ENCODE measurements at regions of chr17 and their contacts with region 1.

Region 1: GRCh38 chr17:7989781-7990655 is 12.4 kb upstream of the GUCY2D start:
- DNase-seq: peak; percentile 85 to 94 (median 88)
- H3K4me3 ChIP-seq: peak overlapping the region in 1 of 2 donors; percentile 58
- H3K4me3 Mint-ChIP-seq: peak overlapping the region; percentile 76 to 90 (median 84)
- H3K27ac ChIP-seq: peak overlapping the region; percentile 35
- H3K27ac Mint-ChIP-seq: peak overlapping the region; percentile 63 to 92 (median 87)
- H3K4me1 ChIP-seq: peaks cover 16% of the 10 kb centered on the region
- H3K4me1 Mint-ChIP-seq: peaks cover 12 to 33% (median 19%) of the 10 kb centered on the region in 4 donors
- H3K27me3 ChIP-seq: no peaks in the 10 kb centered on the region
- H3K27me3 Mint-ChIP-seq: peaks cover 0 to 1% of the 10 kb centered on the region in 2 donors

Region 2: DNA sequence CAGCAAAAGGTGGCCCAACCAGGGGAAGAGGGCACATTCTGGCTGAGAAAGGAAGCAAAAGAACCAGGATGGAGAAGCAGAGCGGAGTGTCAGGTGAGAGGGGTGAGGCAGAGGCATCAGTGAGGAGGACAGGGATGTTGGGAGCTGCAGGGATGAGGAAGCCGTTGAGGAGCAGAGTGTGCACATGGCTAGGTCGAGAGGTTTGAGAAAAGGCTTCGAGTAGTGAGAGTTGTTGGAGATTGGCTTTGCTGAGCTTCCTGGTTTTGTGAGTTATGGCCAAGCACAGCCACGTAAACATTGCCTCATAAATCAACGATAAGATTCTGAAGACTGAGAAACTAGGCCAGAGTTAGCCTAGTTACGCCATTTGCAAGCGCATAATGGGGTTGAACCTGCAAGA is 245.6 kb before region 1 on chr17:
- CTCF ChIA-PET with region 1: interaction called, 11 read pairs
- POLR2A ChIA-PET with region 1: no interaction called
- intact Hi-C with region 1: loop called (anchors 1 kb)
- DNase-seq: no peak
- H3K4me3 ChIP-seq: no peak overlapping the region
- H3K4me3 Mint-ChIP-seq: no peak overlapping the region
- H3K27ac ChIP-seq: no peak overlapping the region
- H3K27ac Mint-ChIP-seq: no peak overlapping the region
- H3K4me1 ChIP-seq: no peaks in the 10 kb centered on the region
- H3K4me1 Mint-ChIP-seq: peaks cover 0 to 4% (median 2%) of the 10 kb centered on the region in 4 donors
- H3K27me3 ChIP-seq: no peaks in the 10 kb centered on the region
- H3K27me3 Mint-ChIP-seq: peaks cover 14 to 18% of the 10 kb centered on the region in 2 donors

Region 3: GRCh38 chr17:7834962-7835813 is 154.8 kb before region 1 on chr17:
- CTCF ChIA-PET with region 1: interaction called, 19 read pairs
- POLR2A ChIA-PET with region 1: interaction called, 12 read pairs
- intact Hi-C with region 1: no loop called
- DNase-seq: peak; percentile 90 to 98 (median 92)
- H3K4me3 ChIP-seq: peak overlapping the region; percentile 76 to 84
- H3K4me3 Mint-ChIP-seq: peak overlapping the region; percentile 90 to 98 (median 94)
- H3K27ac ChIP-seq: peak overlapping the region; percentile 98
- H3K27ac Mint-ChIP-seq: peak overlapping the region; percentile 99 to 100 (median 99)
- H3K4me1 ChIP-seq: peaks cover 45% of the 10 kb centered on the region
- H3K4me1 Mint-ChIP-seq: peaks cover 36 to 64% (median 42%) of the 10 kb centered on the region in 4 donors
- H3K27me3 ChIP-seq: no peaks in the 10 kb centered on the region
- H3K27me3 Mint-ChIP-seq: peaks cover 0 to 9% of the 10 kb centered on the region in 2 donors

Region 4: GRCh38 chr17:7887482-7888183 is 102.4 kb before region 1 on chr17:
- CTCF ChIA-PET with region 1: interaction called, 8 read pairs
- POLR2A ChIA-PET with region 1: interaction called, 4 read pairs
- intact Hi-C with region 1: loop called (anchors 1 kb)
- DNase-seq: peak; percentile 89 to 95 (median 92)
- H3K4me3 ChIP-seq: peak overlapping the region; percentile 86 to 96
- H3K4me3 Mint-ChIP-seq: no peak overlapping the region
- H3K27ac ChIP-seq: peak overlapping the region; percentile 65
- H3K27ac Mint-ChIP-seq: no peak overlapping the region
- H3K4me1 ChIP-seq: peaks cover 46% of the 10 kb centered on the region
- H3K4me1 Mint-ChIP-seq: peaks cover 10 to 16% (median 12%) of the 10 kb centered on the region in 4 donors
- H3K27me3 ChIP-seq: no peaks in the 10 kb centered on the region
- H3K27me3 Mint-ChIP-seq: no peaks in the 10 kb centered on the region

Region 5: DNA sequence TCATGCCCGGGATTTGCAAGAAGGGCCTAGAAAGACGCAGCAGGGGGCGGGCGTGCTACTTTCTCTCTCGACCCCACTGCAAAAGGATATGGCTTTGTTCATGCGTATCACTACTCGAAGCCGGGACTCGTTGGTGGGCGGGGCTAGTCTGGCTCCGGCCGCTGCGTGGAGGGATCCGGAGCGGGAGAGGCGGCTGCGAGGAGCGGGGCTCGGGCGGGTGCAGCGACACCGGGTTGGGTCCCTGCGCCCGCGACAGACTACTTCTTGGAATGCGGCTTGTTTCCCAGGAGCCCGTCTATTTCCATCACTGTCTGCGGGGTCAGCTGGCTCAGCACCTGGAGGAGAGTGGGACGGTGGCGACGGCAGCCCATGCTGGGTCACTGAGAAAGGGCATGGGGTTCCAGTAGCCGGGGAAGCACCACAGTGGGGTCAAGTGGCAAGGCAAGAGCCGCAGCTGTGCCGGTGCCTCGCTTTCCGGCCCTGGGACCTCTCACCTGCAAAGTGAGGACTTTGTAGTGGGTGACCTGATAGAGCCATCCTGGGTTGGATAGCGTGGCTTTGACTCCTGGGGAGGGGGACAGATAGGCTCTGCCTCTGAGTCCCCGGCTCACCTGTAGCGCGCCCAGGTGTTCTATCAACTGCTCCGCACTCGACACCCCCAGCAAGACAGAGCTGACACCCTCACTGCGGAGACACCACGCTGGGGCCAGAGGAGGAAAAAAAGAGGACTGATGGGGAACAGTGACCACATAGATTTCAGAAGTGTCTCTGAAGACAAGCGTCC is 67.0 kb before region 1 on chr17:
- CTCF ChIA-PET with region 1: interaction called, 219 read pairs
- POLR2A ChIA-PET with region 1: interaction called, 14 read pairs
- intact Hi-C with region 1: no loop called
- DNase-seq: peak; percentile 79 to 86 (median 80)
- H3K4me3 ChIP-seq: peak overlapping the region; percentile 48 to 70
- H3K4me3 Mint-ChIP-seq: peak overlapping the region; percentile 77 to 99 (median 88)
- H3K27ac ChIP-seq: peak overlapping the region; percentile 63
- H3K27ac Mint-ChIP-seq: peak overlapping the region; percentile 74 to 100 (median 93)
- H3K4me1 ChIP-seq: peaks cover 15% of the 10 kb centered on the region
- H3K4me1 Mint-ChIP-seq: peaks cover 7 to 25% (median 17%) of the 10 kb centered on the region in 4 donors
- H3K27me3 ChIP-seq: no peaks in the 10 kb centered on the region
- H3K27me3 Mint-ChIP-seq: no peaks in the 10 kb centered on the region

Region 6: DNA sequence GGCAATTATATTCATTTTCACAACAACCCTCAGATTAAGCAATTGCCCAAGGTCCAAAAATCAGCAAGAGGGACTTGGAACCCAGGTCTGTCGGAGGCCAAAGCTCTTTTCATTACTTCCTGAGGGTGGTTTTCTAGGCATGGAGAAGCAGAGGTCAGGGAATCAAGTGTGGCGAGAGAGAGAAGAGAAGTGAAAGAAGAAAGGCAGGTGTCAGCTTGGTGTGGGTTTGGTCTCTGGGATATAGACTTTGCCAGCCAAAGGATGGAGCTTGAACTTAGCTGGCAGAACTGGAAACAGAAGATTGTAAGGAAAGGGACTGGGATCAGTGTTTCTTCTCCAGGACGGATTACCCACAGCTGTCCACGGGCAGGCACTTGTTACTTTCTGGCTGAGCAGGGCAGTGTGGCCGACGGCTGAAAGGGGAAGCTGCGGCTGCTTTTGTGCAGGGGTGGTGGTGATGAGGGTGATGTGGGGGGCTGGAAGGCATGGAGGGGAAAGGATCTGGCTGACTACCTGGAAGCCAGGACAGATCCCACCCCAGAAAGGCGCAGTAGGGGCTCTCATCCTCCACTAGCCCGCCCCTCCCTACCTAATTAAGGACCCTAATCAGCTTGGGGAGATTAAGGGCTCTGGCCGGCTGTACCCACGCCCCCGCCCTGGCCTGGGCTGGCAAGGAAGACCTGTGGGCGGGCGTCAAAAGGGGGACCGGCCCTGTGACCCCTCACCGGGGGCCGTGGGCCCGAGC is 12.1 kb after region 1 on chr17 and contains the start of gene GUCY2D:
- CTCF ChIA-PET with region 1: interaction called, 14 read pairs
- POLR2A ChIA-PET with region 1: interaction called, 6 read pairs
- intact Hi-C with region 1: no loop called
- DNase-seq: no peak
- H3K4me3 ChIP-seq: no peak within 1 kb of the TSS
- H3K4me3 Mint-ChIP-seq: peak within 1 kb of the TSS in 7 of 8 donors; percentile 56 to 84 (median 76)
- H3K27ac ChIP-seq: no peak within 1 kb of the TSS
- H3K27ac Mint-ChIP-seq: peak within 1 kb of the TSS in 1 of 7 donors; percentile 57
- H3K4me1 ChIP-seq: peaks cover 12% of the 10 kb centered on the region
- H3K4me1 Mint-ChIP-seq: peaks cover 6 to 9% (median 7%) of the 10 kb centered on the region in 4 donors
- H3K27me3 ChIP-seq: peaks cover 11% of the 10 kb centered on the region
- H3K27me3 Mint-ChIP-seq: peaks cover 38 to 41% of the 10 kb centered on the region in 2 donors
- total RNA-seq, gene GUCY2D: not detected

Region 7: DNA sequence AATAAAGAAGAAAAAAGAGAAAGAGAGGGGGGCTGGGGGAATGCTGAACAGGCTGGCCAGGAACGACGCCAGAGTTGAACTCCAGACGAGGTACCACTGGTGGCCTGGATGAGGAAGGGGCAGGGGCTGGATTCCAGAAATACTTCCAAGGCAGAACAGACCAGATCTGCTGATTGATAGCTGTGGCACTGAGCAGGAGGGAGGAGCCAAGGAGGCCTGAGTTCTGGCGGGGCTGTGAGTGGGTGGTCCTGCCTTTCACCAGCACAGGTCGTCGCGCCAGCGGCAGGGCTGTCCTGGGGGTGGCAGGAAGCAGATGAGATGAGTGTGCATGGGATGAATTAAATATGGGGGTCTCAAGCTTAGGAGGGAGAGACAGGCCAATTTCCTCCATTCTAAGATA is 749.1 kb after region 1 on chr17:
- CTCF ChIA-PET with region 1: no interaction called
- POLR2A ChIA-PET with region 1: no interaction called
- intact Hi-C with region 1: no loop called
- DNase-seq: no peak
- H3K4me3 ChIP-seq: no peak overlapping the region
- H3K4me3 Mint-ChIP-seq: peak overlapping the region in 6 of 8 donors; percentile 6 to 87 (median 44)
- H3K27ac ChIP-seq: no peak overlapping the region
- H3K27ac Mint-ChIP-seq: peak overlapping the region in 1 of 7 donors; percentile 58
- H3K4me1 ChIP-seq: peaks cover 14% of the 10 kb centered on the region
- H3K4me1 Mint-ChIP-seq: peaks cover 7 to 21% (median 12%) of the 10 kb centered on the region in 4 donors
- H3K27me3 ChIP-seq: no peaks in the 10 kb centered on the region
- H3K27me3 Mint-ChIP-seq: no peaks in the 10 kb centered on the region

Measured in CD4-positive, alpha-beta memory T cell (primary cell).